ENCODE measurements at regions of chr2 and their contacts with region 1.

Region 1: DNA sequence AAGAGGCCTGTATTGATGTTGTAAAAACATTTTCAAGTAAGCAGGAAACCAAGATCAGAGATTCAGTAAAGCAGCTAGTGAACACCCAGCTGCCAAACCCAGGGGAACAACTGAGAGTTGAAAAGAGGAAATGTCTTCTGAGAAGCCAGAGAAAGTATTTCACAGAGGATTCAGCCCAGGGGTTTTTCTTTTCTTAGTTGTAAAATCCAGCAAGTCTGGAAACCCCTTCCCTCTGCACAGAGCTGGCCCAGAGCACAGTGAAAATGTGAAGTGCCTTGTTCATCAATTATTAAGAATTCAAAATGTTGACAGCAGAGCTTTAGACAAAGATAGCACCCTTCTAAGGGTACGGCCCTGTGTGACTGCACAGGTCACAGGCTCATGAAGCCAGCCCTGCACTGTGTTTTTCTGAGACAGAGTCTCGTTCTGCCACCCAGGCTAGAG is 28.4 kb downstream of the AFF3 start:
- DNase-seq: peak; percentile 26
- ATAC-seq: peak; percentile 72
- H3K4me3 Mint-ChIP-seq: peak overlapping the region; percentile 71
- H3K27ac Mint-ChIP-seq: peak overlapping the region; percentile 88
- H3K4me1 Mint-ChIP-seq: peaks cover 82% of the 10 kb centered on the region
- H3K27me3 Mint-ChIP-seq: no peaks in the 10 kb centered on the region
- CTCF ChIP-seq: no peak

Region 2: DNA sequence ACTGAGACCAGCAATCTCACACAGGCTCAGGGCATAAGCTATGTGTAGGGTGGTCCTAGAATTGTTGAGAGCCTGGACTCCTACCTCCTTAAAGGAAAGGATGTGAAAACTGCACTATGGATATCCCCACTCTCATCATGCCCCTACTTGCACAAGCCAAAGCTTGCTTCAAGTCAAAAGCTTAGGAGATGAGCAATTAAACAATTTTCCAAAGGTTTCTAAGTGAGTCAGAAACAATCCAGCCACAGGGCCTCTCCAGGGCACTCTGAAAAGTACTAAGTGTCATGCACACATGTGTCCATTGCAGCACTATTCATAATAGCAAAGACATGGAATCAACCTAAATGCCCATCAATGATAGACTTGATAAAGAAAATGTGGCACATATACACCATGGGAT is 187.0 kb before region 1 on chr2:
- CTCF ChIA-PET with region 1: no interaction called
- POLR2A ChIA-PET with region 1: no interaction called
- intact Hi-C with region 1: no loop called
- DNase-seq: no peak
- ATAC-seq: no peak
- H3K4me3 Mint-ChIP-seq: no peak overlapping the region
- H3K27ac Mint-ChIP-seq: peak overlapping the region; percentile 91
- H3K4me1 Mint-ChIP-seq: peaks cover 85% of the 10 kb centered on the region
- H3K27me3 Mint-ChIP-seq: no peaks in the 10 kb centered on the region
- CTCF ChIP-seq: no peak

Region 3: DNA sequence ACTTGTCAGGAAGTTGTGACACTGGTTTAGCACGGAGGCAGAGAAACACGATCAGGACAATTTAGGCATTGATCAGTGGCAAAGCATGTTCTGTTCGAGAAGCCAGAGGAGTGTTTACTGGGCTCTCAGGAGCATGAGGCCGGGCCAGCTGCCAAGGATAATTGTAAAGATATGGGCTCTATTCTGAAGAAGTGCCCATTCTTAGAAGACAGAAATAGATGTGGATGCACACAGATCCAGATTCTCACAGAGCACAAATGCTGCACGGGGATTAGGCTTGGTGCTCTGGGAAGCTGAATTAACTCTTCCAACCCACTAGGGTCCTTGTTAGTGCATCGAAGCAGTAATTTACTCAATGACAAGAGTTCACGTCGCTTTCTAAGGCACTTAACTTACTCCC is 12.2 kb after region 1 on chr2:
- CTCF ChIA-PET with region 1: no interaction called
- POLR2A ChIA-PET with region 1: interaction called, 76 read pairs
- intact Hi-C with region 1: loop called (anchors 1 kb)
- DNase-seq: no peak
- ATAC-seq: no peak
- H3K4me3 Mint-ChIP-seq: no peak overlapping the region
- H3K27ac Mint-ChIP-seq: peak overlapping the region; percentile 30
- H3K4me1 Mint-ChIP-seq: peaks cover 80% of the 10 kb centered on the region
- H3K27me3 Mint-ChIP-seq: no peaks in the 10 kb centered on the region
- CTCF ChIP-seq: no peak

Region 4: GRCh38 chr2:100136310-100136709 is 22.3 kb after region 1 on chr2:
- CTCF ChIA-PET with region 1: interaction called, 6 read pairs
- POLR2A ChIA-PET with region 1: interaction called, 149 read pairs
- intact Hi-C with region 1: loop called (anchors 1 kb)
- DNase-seq: no peak
- ATAC-seq: peak; percentile 33
- H3K4me3 Mint-ChIP-seq: no peak overlapping the region
- H3K27ac Mint-ChIP-seq: no peak overlapping the region
- H3K4me1 Mint-ChIP-seq: peaks cover 27% of the 10 kb centered on the region
- H3K27me3 Mint-ChIP-seq: no peaks in the 10 kb centered on the region
- CTCF ChIP-seq: no peak

Measured in activated B cell treated with CpG ODN at 0.5 μM for 24 hours (primary cell).